PC-3 (cell line): ENCODE measurements at regions of chr1 and their contacts with region 1.

Region 1: GRCh38 chr1:196309386-196309785 is 298.9 kb downstream of the KCNT2 start:
- DNase-seq: peak; percentile 59
- ATAC-seq: peak; percentile 67
- H3K4me3 ChIP-seq: no peak overlapping the region
- H3K27ac ChIP-seq: no peak overlapping the region
- H3K4me1 ChIP-seq: peaks cover 20% of the 10 kb centered on the region
- H3K27me3 ChIP-seq: no peaks in the 10 kb centered on the region
- CTCF ChIP-seq: peak; percentile 56; the same call in 1 of the 2 replicates

Region 2: DNA sequence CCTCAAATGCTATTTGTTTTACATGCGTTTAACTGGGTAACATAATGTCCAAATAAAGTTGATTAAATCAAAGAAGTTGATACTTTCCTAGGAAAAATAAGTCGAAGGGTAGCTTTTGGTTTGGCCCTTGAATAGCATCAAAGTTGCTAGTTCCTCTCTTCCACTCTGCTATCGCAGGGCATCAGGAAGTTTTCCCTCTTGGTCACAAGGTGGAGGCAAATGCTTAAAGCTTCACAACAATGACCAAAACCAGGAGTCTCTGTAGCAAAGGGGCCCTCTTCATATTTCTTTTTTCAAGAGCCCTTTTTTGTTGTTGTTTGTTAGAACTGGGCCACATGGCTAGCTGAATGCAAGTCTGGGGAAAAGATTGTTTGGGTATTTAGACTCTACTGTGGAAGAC is 369.5 kb before region 1 on chr1:
- CTCF ChIA-PET with region 1: no interaction called
- POLR2A ChIA-PET with region 1: no interaction called
- intact Hi-C with region 1: loop called (anchors 1 kb)
- DNase-seq: peak; percentile 42
- ATAC-seq: peak; percentile 74
- H3K4me3 ChIP-seq: no peak overlapping the region
- H3K27ac ChIP-seq: no peak overlapping the region
- H3K4me1 ChIP-seq: no peaks in the 10 kb centered on the region
- H3K27me3 ChIP-seq: no peaks in the 10 kb centered on the region
- CTCF ChIP-seq: peak; percentile 52

Region 3: GRCh38 chr1:196034080-196034706 is 275.2 kb before region 1 on chr1:
- CTCF ChIA-PET with region 1: no interaction called
- POLR2A ChIA-PET with region 1: no interaction called
- intact Hi-C with region 1: loop called (anchors 10 kb)
- DNase-seq: no peak
- ATAC-seq: no peak
- H3K4me3 ChIP-seq: no peak overlapping the region
- H3K27ac ChIP-seq: no peak overlapping the region
- H3K4me1 ChIP-seq: no peaks in the 10 kb centered on the region
- H3K27me3 ChIP-seq: no peaks in the 10 kb centered on the region
- CTCF ChIP-seq: no peak

Region 4: DNA sequence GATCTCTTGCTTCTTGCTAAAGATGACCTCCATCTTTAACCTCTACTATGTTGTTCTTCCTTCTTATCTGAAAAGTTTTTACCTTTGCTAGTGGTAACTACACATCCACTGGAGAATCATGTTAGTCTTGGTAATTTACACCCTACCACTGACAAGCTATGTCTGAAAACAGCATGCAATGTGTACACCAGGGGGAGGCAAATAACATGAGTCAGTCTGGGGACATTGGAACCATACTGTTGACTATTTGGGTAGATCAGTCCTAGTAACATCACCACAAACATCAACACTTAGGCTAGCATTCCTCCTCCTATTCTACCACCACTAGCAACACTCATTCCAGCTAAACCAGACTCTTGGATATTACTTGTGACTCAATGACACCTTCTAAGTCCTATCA is 250.2 kb before region 1 on chr1:
- CTCF ChIA-PET with region 1: no interaction called
- POLR2A ChIA-PET with region 1: no interaction called
- intact Hi-C with region 1: no loop called
- DNase-seq: peak; percentile 7
- ATAC-seq: peak; percentile 45; the same call in 1 of the 2 replicates
- H3K4me3 ChIP-seq: no peak overlapping the region
- H3K27ac ChIP-seq: no peak overlapping the region
- H3K4me1 ChIP-seq: no peaks in the 10 kb centered on the region
- H3K27me3 ChIP-seq: no peaks in the 10 kb centered on the region
- CTCF ChIP-seq: peak; percentile 15; the same call in 1 of the 2 replicates

Region 5: GRCh38 chr1:196148367-196148970 is 160.9 kb before region 1 on chr1:
- CTCF ChIA-PET with region 1: interaction called, 9 read pairs
- POLR2A ChIA-PET with region 1: no interaction called
- intact Hi-C with region 1: loop called (anchors 1 kb)
- DNase-seq: peak; percentile 70
- ATAC-seq: peak; percentile 53
- H3K4me3 ChIP-seq: no peak overlapping the region
- H3K27ac ChIP-seq: no peak overlapping the region
- H3K4me1 ChIP-seq: no peaks in the 10 kb centered on the region
- H3K27me3 ChIP-seq: no peaks in the 10 kb centered on the region
- CTCF ChIP-seq: peak; percentile 63